ENCODE measurements at regions of chr2 and their contacts with region 1.

Region 1: DNA sequence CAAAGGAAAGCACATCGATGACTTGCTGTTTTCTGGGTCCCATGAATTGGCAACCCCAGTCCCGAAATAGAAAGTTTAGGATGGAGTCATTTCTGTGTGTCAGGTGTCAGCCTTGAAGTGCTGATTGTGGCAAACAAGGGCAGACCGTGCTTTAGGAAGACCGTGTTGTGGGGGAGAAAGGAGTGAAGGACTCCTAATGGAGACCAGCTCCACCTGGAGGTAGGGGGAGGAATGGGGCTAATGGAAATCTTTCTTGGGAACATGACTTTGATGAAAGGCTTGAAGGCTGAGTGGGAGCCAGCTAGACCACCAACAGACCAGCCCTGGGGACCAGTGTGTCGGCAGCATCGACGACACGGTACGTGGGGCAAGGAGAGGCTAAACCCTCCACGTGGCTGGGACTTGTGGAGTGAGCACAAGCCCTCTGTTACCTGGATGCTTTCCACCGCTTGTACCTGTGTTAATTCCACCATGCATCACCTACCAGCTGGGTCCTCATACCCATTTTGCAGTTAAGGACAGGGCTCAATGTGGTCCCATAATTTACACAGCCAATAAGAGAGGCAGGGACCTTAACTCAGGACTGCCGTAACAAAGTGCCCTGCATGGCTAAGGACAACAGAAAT is 104.2 kb downstream of the SH3BP4 start:
- DNase-seq: no peak
- ATAC-seq: no peak
- H3K4me3 ChIP-seq: no peak overlapping the region
- H3K4me3 Mint-ChIP-seq: no peak overlapping the region
- H3K27ac ChIP-seq: no peak overlapping the region
- H3K27ac Mint-ChIP-seq: no peak overlapping the region
- H3K4me1 ChIP-seq: no peaks in the 10 kb centered on the region
- H3K4me1 Mint-ChIP-seq: no peaks in the 10 kb centered on the region
- H3K27me3 ChIP-seq: peaks cover 0 to 23% of the 10 kb centered on the region in 2 experiments
- H3K27me3 Mint-ChIP-seq: peaks cover 6 to 12% of the 10 kb centered on the region in 2 donors

Region 2: DNA sequence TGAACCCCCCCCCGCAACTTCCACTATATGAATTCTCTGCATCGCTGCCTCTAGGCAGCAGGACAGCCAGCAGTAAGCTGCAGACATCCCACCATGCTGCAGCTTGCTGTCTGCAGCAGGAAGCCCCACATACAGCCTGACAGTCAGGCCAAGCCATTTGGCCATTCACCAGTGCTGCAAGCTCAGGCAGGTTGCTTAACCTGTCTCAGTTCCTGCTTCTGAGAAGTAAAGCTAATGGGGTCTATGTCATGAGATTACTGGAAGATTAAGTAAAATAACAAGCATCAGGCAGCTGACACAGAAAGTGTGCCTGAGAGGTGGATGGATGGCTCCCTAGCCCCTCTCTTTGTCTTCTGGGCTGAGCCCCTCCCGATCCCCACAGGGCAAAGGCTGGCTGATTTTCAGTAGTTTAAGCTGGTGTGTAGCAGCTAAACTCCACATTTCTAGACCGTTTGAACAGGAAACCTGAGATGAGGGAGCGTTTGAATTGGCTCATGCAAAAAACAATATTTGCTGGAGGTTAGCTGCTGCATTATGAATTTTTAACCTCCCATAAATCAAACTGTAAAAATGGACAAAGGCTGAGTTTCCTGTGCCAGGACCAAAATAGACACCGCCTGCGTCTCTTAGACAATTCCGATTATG is 365.3 kb before region 1 on chr2:
- CTCF ChIA-PET with region 1: no interaction called
- POLR2A ChIA-PET with region 1: no interaction called
- DNase-seq: no peak
- ATAC-seq: no peak
- H3K4me3 ChIP-seq: no peak overlapping the region
- H3K4me3 Mint-ChIP-seq: no peak overlapping the region
- H3K27ac ChIP-seq: no peak overlapping the region
- H3K27ac Mint-ChIP-seq: no peak overlapping the region
- H3K4me1 ChIP-seq: no peaks in the 10 kb centered on the region
- H3K4me1 Mint-ChIP-seq: no peaks in the 10 kb centered on the region
- H3K27me3 ChIP-seq: peaks cover 0 to 29% of the 10 kb centered on the region in 2 experiments
- H3K27me3 Mint-ChIP-seq: peaks cover 42 to 44% of the 10 kb centered on the region in 2 donors

Region 3: DNA sequence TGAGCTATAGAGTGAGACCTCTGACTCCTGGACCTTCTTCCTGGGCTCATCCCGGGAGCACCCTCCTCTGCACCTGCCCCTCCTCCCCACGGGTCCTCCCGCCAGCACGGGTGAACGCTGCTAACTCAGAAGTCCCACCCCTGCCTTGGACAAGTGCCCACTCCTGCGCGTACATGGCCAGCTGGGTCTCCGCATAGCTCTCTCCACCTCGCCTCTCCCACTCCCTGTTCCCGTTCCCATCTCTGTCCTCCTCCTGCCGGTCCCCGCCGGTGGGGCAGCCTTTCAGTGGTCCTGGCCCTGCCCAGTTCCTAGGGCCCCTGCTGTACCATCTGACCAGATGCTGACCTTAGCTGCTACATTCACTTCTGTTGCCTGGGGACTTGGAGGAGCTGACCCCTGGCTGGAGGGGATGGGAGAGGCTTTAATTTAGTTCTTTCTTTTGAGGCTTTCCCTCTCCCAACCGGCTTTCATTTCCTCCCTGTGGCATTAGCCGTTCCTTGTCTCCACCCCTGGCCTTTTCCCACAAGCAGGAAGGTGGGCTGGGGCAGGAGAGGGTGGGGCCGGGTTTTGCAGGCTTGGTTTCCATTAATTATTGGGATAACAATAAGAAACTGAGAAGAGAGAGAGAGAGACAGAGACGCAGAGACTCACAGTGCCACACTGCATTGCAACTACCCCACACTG is 31.9 kb after region 1 on chr2:
- CTCF ChIA-PET with region 1: no interaction called
- POLR2A ChIA-PET with region 1: no interaction called
- DNase-seq: no peak
- ATAC-seq: no peak
- H3K4me3 ChIP-seq: no peak overlapping the region
- H3K4me3 Mint-ChIP-seq: no peak overlapping the region
- H3K27ac ChIP-seq: no peak overlapping the region
- H3K27ac Mint-ChIP-seq: no peak overlapping the region
- H3K4me1 ChIP-seq: no peaks in the 10 kb centered on the region
- H3K4me1 Mint-ChIP-seq: no peaks in the 10 kb centered on the region
- H3K27me3 ChIP-seq: peaks cover 0 to 31% of the 10 kb centered on the region in 2 experiments
- H3K27me3 Mint-ChIP-seq: peaks cover 34 to 46% of the 10 kb centered on the region in 2 donors

Region 4: GRCh38 chr2:235518322-235519090 is 462.5 kb after region 1 on chr2:
- CTCF ChIA-PET with region 1: no interaction called
- POLR2A ChIA-PET with region 1: interaction called in 1 of 2 experiments, 10 read pairs
- DNase-seq: no peak
- ATAC-seq: no peak
- H3K4me3 ChIP-seq: no peak overlapping the region
- H3K4me3 Mint-ChIP-seq: no peak overlapping the region
- H3K27ac ChIP-seq: no peak overlapping the region
- H3K27ac Mint-ChIP-seq: no peak overlapping the region
- H3K4me1 ChIP-seq: no peaks in the 10 kb centered on the region
- H3K4me1 Mint-ChIP-seq: no peaks in the 10 kb centered on the region
- H3K27me3 ChIP-seq: peaks cover 0 to 24% of the 10 kb centered on the region in 2 experiments
- H3K27me3 Mint-ChIP-seq: peaks cover 5 to 9% of the 10 kb centered on the region in 2 donors